BJ (cell line): ENCODE measurements at regions of chr17 and their contacts with region 1.

Region 1: GRCh38 chr17:74790161-74791054 is 14.3 kb upstream of the NAT9 start:
- DNase-seq: no peak
- H3K4me3 ChIP-seq: no peak overlapping the region
- H3K27me3 ChIP-seq: no peaks in the 10 kb centered on the region
- CTCF ChIP-seq: no peak

Region 2: GRCh38 chr17:74712756-74713155 is 77.7 kb before region 1 on chr17 and contains the start of gene CD300LF:
- CTCF ChIA-PET with region 1: no interaction called
- POLR2A ChIA-PET with region 1: no interaction called
- DNase-seq: no peak
- H3K4me3 ChIP-seq: no peak within 1 kb of the TSS
- H3K27me3 ChIP-seq: peaks cover 1% of the 10 kb centered on the region; the same call in 1 of the 2 replicates
- CTCF ChIP-seq: no peak
- polyA plus RNA-seq, gene CD300LF: not detected in 2 replicates

Region 3: DNA sequence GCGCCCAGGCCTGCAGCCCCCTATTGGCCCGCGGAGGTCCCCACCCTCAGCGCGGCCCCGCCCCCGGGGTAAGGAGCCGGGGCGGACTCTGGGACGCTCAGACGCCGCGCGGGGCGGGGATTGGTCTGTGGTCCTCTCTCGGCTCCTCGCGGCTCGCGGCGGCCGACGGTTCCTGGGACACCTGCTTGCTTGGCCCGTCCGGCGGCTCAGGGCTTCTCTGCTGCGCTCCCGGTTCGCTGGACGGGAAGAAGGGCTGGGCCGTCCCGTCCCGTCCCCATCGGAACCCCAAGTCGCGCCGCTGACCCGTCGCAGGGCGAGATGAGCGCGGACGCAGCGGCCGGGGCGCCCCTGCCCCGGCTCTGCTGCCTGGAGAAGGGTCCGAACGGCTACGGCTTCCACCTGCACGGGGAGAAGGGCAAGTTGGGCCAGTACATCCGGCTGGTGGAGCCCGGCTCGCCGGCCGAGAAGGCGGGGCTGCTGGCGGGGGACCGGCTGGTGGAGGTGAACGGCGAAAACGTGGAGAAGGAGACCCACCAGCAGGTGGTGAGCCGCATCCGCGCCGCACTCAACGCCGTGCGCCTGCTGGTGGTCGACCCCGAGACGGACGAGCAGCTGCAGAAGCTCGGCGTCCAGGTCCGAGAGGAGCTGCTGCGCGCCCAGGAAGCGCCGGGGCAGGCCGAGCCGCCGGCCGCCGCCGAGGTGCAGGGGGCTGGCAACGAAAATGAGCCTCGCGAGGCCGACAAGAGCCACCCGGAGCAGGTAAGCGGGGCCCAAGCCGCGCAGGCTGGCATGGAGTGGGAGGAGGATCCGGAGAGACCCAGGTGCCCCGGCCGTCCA is 41.7 kb before region 1 on chr17 and contains the start of gene NHERF1:
- CTCF ChIA-PET with region 1: interaction called, 16 read pairs
- POLR2A ChIA-PET with region 1: no interaction called
- DNase-seq: peak; percentile 66
- H3K4me3 ChIP-seq: peak within 1 kb of the TSS; percentile 64
- H3K27me3 ChIP-seq: no peaks in the 10 kb centered on the region
- CTCF ChIP-seq: peak; percentile 16; the same call in 1 of the 2 replicates
- polyA plus RNA-seq, gene NHERF1: 13.7 and 16.3 TPM in 2 replicates

Region 4: GRCh38 chr17:74801896-74802295 is 11.5 kb after region 1 on chr17:
- CTCF ChIA-PET with region 1: interaction called, 11 read pairs
- POLR2A ChIA-PET with region 1: no interaction called
- DNase-seq: no peak
- H3K4me3 ChIP-seq: no peak overlapping the region
- H3K27me3 ChIP-seq: no peaks in the 10 kb centered on the region
- CTCF ChIP-seq: no peak

Region 5: DNA sequence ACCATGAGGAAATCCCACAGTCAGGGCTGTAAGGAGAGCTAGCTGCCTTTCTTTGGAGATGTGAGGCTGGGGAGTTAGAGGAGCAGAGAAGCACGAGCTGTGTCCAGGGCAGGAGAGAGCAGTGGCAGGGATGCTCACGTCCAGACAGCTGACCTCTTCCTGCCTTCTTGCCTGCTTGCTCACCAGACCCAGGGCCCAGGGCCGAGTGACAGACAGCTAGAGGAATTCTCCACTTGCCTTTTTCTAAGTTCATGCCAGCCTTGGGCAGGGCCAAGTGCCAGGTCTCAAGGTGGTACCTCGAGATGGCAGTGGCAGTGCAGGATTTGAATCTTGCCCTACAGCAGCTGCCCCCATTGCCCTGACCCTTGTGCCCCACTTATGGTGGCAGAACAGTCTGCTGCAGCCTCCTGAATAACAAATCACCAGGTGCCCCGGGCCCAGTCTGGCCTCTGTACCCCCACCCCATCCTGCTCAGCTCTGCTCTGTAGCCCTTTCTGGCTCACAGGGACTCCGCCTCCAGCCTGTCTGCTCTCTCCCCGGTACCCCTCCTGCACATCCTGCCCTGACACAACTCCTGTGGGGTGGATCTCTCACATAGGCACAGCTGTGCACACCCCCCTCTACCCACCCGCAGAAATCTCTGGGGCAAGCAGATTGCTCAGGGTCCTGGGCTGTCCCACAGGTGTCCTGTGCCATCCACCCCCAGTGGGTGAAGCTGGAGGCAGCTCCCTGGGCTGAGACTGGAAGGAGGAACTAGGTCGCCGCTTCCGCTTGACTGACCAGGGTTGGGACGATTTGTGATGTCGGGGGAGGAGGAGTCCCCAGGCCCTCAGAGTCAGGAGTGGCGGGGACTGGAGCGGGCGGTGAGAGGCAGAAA is 43.3 kb after region 1 on chr17:
- CTCF ChIA-PET with region 1: interaction called, 10 read pairs
- POLR2A ChIA-PET with region 1: no interaction called
- DNase-seq: no peak
- H3K4me3 ChIP-seq: no peak overlapping the region
- H3K27me3 ChIP-seq: no peaks in the 10 kb centered on the region
- CTCF ChIP-seq: no peak

Region 6: DNA sequence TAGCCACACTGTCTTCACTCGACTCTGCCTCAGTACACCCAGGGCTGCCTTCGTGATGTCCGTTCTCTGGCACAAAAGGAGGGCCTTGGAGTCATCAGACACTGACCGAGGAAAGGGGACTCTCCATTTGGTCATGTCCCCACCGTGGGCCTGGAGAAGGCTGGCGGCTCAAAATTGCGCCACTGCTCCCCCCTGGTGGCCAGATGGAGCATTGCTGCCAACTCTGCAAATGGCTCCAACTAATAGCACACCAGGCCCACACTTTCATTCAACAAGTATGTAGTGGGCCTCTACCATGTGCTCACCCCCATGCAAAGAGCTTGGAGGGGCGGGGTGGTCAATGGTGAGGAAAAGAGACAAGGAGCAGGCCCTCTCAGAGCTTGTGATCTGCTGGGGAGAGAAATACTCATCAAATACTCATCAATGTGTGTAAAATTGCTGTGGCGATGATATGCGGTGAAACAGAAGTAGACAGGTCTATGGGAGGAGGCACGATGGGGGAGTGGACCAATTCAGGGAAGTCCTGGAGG is 74.5 kb after region 1 on chr17:
- CTCF ChIA-PET with region 1: interaction called, 297 read pairs
- POLR2A ChIA-PET with region 1: no interaction called
- DNase-seq: no peak
- H3K4me3 ChIP-seq: no peak overlapping the region
- H3K27me3 ChIP-seq: peaks cover 15% of the 10 kb centered on the region
- CTCF ChIP-seq: peak; percentile 96

Region 7: DNA sequence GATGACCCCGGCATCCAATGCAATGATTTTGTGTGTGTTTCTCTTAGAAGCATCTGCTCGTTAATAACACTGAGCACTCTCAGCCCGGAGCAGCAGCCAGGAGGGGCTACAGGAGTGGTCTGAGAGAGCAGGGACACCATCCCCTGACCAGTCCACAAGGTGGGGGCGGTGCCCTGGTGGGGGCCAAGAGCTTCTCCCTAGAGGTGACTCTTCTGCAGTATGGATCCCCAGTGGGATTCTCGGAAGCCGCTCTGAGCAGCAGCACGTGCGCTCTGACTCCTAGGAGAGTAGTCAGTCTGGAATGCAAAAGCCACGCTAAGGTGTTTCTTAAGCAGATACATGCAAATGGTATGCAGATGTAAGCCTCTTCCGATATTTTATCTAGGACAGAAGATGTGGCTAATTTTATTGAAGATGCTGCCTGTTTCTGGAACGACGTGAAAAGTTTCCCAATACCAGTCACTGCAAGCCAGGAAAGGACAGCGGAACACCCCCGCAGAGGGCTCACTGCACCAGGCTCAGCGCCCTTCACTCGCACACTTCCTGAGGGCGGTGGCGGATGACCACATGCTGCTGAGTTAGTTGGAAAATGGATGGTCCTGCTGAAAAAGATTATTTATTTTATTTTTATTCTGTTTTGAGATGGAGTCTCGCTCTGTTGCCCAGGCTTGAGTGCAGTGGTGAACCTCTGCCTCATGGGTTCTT is 92.8 kb after region 1 on chr17:
- CTCF ChIA-PET with region 1: no interaction called
- POLR2A ChIA-PET with region 1: no interaction called
- DNase-seq: no peak
- H3K4me3 ChIP-seq: no peak overlapping the region
- H3K27me3 ChIP-seq: peaks cover 18% of the 10 kb centered on the region
- CTCF ChIP-seq: no peak